BJ (cell line): ENCODE measurements at regions of chr12 and their contacts with region 1.

Region 1: GRCh38 chr12:120580787-120581723 is at the start of gene POP5:
- DNase-seq: peak; percentile 87
- H3K4me3 ChIP-seq: peak within 1 kb of the TSS; percentile 83
- H3K27me3 ChIP-seq: peaks cover 4% of the 10 kb centered on the region
- CTCF ChIP-seq: no peak
- polyA plus RNA-seq, gene POP5: 46.7 and 48.0 TPM in 2 replicates

Region 2: GRCh38 chr12:118763234-118763633 is 1817.8 kb before region 1 on chr12:
- CTCF ChIA-PET with region 1: no interaction called
- POLR2A ChIA-PET with region 1: no interaction called
- DNase-seq: no peak
- H3K4me3 ChIP-seq: no peak overlapping the region
- H3K27me3 ChIP-seq: no peaks in the 10 kb centered on the region
- CTCF ChIP-seq: no peak

Region 3: GRCh38 chr12:120546050-120546386 is 35.0 kb before region 1 on chr12:
- CTCF ChIA-PET with region 1: no interaction called
- POLR2A ChIA-PET with region 1: no interaction called
- DNase-seq: no peak
- H3K4me3 ChIP-seq: no peak overlapping the region
- H3K27me3 ChIP-seq: no peaks in the 10 kb centered on the region
- CTCF ChIP-seq: no peak

Region 4: DNA sequence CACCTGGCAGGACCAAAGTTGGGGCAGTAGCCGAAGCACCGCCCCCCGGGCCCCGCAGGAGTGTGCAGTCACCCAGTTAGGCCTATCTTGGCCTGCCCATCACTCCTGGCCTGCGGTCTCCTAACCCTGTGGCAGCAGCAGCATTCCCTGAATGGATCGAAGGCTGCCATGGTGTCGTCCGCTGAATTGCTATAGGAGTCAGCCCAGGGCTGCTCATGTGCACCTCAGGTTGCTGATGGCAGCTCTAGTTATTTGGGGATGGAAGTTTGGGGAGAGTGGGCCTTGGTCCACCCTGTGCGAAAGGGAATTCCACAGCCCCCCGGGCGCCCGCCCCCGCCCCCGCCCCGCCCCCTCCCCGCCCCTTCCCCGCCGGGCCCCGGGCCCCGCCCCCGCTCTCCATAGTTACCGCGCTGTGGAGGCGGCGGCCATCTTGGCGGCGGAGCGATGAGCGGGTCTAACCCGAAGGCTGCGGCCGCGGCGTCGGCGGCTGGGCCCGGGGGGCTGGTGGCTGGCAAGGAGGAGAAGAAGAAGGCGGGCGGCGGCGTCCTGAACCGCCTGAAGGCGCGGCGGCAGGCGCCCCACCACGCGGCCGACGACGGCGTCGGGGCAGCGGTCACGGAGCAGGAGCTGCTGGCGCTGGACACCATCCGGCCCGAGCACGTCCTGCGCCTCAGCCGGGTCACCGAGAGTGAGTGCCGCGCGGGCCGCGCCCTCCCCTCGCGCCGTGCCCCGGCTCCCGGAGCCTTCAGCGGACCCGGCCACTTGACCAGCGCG is 129.2 kb after region 1 on chr12 and contains the start of gene UNC119B:
- CTCF ChIA-PET with region 1: interaction called, 16 read pairs
- POLR2A ChIA-PET with region 1: no interaction called
- DNase-seq: no peak
- H3K4me3 ChIP-seq: peak within 1 kb of the TSS; percentile 81
- H3K27me3 ChIP-seq: no peaks in the 10 kb centered on the region
- CTCF ChIP-seq: no peak
- polyA plus RNA-seq, gene UNC119B: 32.0 and 37.0 TPM in 2 replicates

Region 5: GRCh38 chr12:120971299-120972179 is 390.5 kb after region 1 on chr12:
- CTCF ChIA-PET with region 1: interaction called, 45 read pairs
- POLR2A ChIA-PET with region 1: no interaction called
- DNase-seq: peak; percentile 5
- H3K4me3 ChIP-seq: no peak overlapping the region
- H3K27me3 ChIP-seq: peaks cover 4% of the 10 kb centered on the region
- CTCF ChIP-seq: peak; percentile 78